Endothelial cell of umbilical vein (primary cell): ENCODE measurements at regions of chr20 and their contacts with region 1.

Region 1: DNA sequence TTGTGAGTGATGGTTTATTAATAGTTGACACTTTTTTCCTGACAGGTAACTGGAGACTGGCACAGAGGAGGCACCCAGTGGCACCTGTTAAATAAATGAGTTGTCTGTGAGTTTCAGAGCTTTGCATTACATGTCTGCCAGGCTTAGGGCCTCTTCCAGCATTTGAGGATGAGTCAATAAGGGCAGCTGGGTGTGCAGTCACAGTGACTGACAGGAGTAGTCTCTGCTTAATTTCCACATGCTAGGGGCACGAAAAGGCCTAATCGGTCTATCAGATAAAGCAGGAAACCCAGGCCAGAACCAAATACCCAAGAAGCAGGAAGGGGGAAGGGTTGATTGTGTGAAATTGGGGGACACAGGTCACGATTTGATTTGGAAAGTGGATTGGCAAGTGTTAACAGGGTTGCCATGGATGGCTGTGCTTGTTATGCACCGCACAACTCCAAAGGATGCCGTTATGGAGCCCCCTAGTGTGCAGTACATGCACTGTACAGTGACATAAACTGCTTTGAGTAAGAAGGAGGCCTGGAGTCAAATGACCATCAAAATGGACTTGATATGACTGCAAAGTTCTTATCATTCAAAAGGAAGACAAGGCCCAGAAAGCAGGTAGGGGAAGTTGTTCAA is 111.9 kb upstream of the GGTLC1 start:
- DNase-seq: peak; percentile 64
- H3K4me3 ChIP-seq: no peak overlapping the region
- H3K27ac ChIP-seq: no peak overlapping the region
- H3K4me1 ChIP-seq: peaks cover 33% of the 10 kb centered on the region
- H3K27me3 ChIP-seq: peaks cover 0 to 2% of the 10 kb centered on the region in 2 experiments
- CTCF ChIP-seq: peak; percentile 77 to 86
- POLR2A ChIP-seq: no peak

Region 2: DNA sequence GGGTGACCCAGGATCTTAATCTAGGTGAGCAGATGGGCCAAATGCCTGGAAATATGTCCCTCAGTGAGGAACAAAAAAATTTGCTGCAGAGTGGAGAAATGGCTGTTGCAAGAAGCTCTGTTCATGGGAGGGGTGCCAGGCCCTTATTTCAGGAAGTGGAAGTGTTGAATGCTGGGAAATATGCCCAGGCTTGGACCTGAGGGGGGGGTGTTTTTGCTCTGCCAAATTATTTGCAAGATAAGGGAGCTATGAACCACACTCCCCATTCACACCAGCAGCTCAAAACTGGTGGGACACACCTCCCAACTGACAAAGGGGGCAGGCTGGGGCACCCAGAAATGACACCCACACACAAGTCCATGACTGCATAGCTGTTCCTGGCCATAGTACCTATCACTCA is 420.4 kb before region 1 on chr20:
- CTCF ChIA-PET with region 1: no interaction called
- POLR2A ChIA-PET with region 1: no interaction called
- dilution Hi-C with region 1: no loop called
- intact Hi-C with region 1: loop called (anchors 5 kb)
- DNase-seq: no peak
- H3K4me3 ChIP-seq: no peak overlapping the region
- H3K27ac ChIP-seq: no peak overlapping the region
- H3K4me1 ChIP-seq: peaks cover 24% of the 10 kb centered on the region
- H3K27me3 ChIP-seq: no peaks in the 10 kb centered on the region
- CTCF ChIP-seq: no peak
- POLR2A ChIP-seq: no peak

Region 3: GRCh38 chr20:23995905-23996666 is 104.4 kb before region 1 on chr20:
- CTCF ChIA-PET with region 1: no interaction called
- POLR2A ChIA-PET with region 1: no interaction called
- dilution Hi-C with region 1: no loop called
- intact Hi-C with region 1: loop called (anchors 2 kb)
- DNase-seq: peak; percentile 24
- H3K4me3 ChIP-seq: no peak overlapping the region
- H3K27ac ChIP-seq: no peak overlapping the region
- H3K4me1 ChIP-seq: no peaks in the 10 kb centered on the region
- H3K27me3 ChIP-seq: peaks cover 2 to 6% of the 10 kb centered on the region in 2 experiments
- CTCF ChIP-seq: peak; percentile 55 to 59
- POLR2A ChIP-seq: no peak

Region 4: GRCh38 chr20:24118441-24119175 is 18.1 kb after region 1 on chr20:
- CTCF ChIA-PET with region 1: interaction called, 26 read pairs
- POLR2A ChIA-PET with region 1: no interaction called
- dilution Hi-C with region 1: no loop called
- intact Hi-C with region 1: loop called (anchors 1 kb)
- DNase-seq: peak; percentile 90
- H3K4me3 ChIP-seq: no peak overlapping the region
- H3K27ac ChIP-seq: peak overlapping the region; percentile 27
- H3K4me1 ChIP-seq: peaks cover 41% of the 10 kb centered on the region
- H3K27me3 ChIP-seq: no peaks in the 10 kb centered on the region
- CTCF ChIP-seq: no peak
- POLR2A ChIP-seq: no peak

Region 5: GRCh38 chr20:24379484-24379927 is 279.0 kb after region 1 on chr20:
- CTCF ChIA-PET with region 1: no interaction called
- POLR2A ChIA-PET with region 1: no interaction called
- dilution Hi-C with region 1: no loop called
- intact Hi-C with region 1: no loop called
- DNase-seq: no peak
- H3K4me3 ChIP-seq: no peak overlapping the region
- H3K27ac ChIP-seq: no peak overlapping the region
- H3K4me1 ChIP-seq: no peaks in the 10 kb centered on the region
- H3K27me3 ChIP-seq: no peaks in the 10 kb centered on the region
- CTCF ChIP-seq: no peak
- POLR2A ChIP-seq: no peak

Region 6: GRCh38 chr20:24917797-24918578 is 817.5 kb after region 1 on chr20:
- CTCF ChIA-PET with region 1: interaction called, 4 read pairs
- POLR2A ChIA-PET with region 1: no interaction called
- dilution Hi-C with region 1: no loop called
- intact Hi-C with region 1: loop called (anchors 2 kb)
- DNase-seq: peak; percentile 55
- H3K4me3 ChIP-seq: no peak overlapping the region
- H3K27ac ChIP-seq: no peak overlapping the region
- H3K4me1 ChIP-seq: no peaks in the 10 kb centered on the region
- H3K27me3 ChIP-seq: no peaks in the 10 kb centered on the region
- CTCF ChIP-seq: peak; percentile 80 to 88
- POLR2A ChIP-seq: no peak